Posterior cingulate gyrus (tissue), 11 donors: ENCODE measurements at regions of chr3 and their contacts with region 1.

Region 1: GRCh38 chr3:19149368-19149767 is 1.1 kb downstream of the KCNH8 start:
- DNase-seq: peak in 1 of 10 donors; percentile 24

Region 2: DNA sequence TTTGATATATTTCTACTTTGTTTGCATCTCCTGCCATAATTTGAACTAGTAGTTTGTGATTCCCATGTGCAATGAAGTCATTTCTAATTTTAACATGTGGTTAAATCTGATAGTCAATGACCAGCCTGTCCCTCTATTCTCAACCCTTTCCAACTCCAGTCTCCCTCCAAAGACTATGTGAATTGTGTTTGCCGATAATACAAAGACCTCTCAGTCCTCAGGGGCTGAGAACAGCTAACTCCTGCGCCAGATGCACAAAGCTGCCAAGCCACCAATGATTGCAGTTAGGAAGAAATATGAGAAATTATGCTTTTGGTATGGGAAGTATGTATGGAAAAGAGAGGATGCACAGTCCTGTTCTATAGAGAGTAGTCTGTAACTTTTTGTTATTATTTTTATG is 52.9 kb after region 1 on chr3:
- intact Hi-C with region 1: loop called (anchors 2 kb)
- DNase-seq: peak in 6 of 10 donors; percentile 28 to 90 (median 46)